ENCODE measurements at regions of chr3 and their contacts with region 1.

Region 1: GRCh38 chr3:108552267-108553159 is 36.7 kb downstream of the CIP2A start:
- DNase-seq: peak; percentile 68
- H3K4me3 ChIP-seq: no peak overlapping the region
- H3K27ac ChIP-seq: no peak overlapping the region
- H3K4me1 ChIP-seq: peaks cover 12% of the 10 kb centered on the region
- H3K27me3 ChIP-seq: no peaks in the 10 kb centered on the region
- CTCF ChIP-seq: peak; percentile 21 to 31
- POLR2A ChIP-seq: no peak

Region 2: GRCh38 chr3:107172411-107172810 is 1380.1 kb before region 1 on chr3:
- CTCF ChIA-PET with region 1: no interaction called
- POLR2A ChIA-PET with region 1: no interaction called
- dilution Hi-C with region 1: no loop called
- intact Hi-C with region 1: no loop called
- DNase-seq: no peak
- H3K4me3 ChIP-seq: no peak overlapping the region
- H3K27ac ChIP-seq: no peak overlapping the region
- H3K4me1 ChIP-seq: no peaks in the 10 kb centered on the region
- H3K27me3 ChIP-seq: no peaks in the 10 kb centered on the region
- CTCF ChIP-seq: no peak
- POLR2A ChIP-seq: no peak

Region 3: DNA sequence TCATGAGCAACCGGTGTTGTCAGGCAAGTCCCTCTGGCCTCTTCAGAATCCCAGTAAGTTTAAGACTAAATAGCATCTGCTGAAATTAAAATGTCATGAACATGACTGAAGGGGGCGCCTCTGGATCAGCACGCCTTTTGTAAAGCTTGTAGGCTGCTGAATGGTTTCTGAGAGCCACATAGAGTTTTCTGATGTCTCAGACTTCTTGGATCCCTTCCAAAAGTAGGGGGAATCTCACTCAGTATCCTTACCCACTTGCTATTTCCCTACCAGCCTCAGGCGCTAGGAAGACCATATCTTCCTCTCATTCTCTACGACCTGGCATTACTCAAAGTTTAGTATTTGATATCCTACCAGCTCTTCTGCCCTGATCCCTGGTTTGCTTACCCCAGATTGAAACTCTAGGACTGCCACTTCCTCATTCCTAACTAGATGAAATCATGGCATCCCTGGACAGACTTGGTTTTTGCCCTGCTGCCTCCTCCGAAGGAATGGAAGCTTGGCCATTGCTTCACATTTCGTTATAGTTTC is 399.0 kb before region 1 on chr3:
- CTCF ChIA-PET with region 1: interaction called, 6 read pairs
- POLR2A ChIA-PET with region 1: no interaction called
- dilution Hi-C with region 1: no loop called
- intact Hi-C with region 1: loop called (anchors 2 kb)
- DNase-seq: peak; percentile 43
- H3K4me3 ChIP-seq: no peak overlapping the region
- H3K27ac ChIP-seq: no peak overlapping the region
- H3K4me1 ChIP-seq: peaks cover 10% of the 10 kb centered on the region
- H3K27me3 ChIP-seq: no peaks in the 10 kb centered on the region
- CTCF ChIP-seq: peak; percentile 18 to 30
- POLR2A ChIP-seq: no peak

Region 4: GRCh38 chr3:108505811-108506210 is 46.7 kb before region 1 on chr3:
- CTCF ChIA-PET with region 1: interaction called, 22 read pairs
- POLR2A ChIA-PET with region 1: no interaction called
- dilution Hi-C with region 1: no loop called
- intact Hi-C with region 1: no loop called
- DNase-seq: no peak
- H3K4me3 ChIP-seq: no peak overlapping the region
- H3K27ac ChIP-seq: no peak overlapping the region
- H3K4me1 ChIP-seq: no peaks in the 10 kb centered on the region
- H3K27me3 ChIP-seq: peaks cover 2% of the 10 kb centered on the region in 2 experiments
- CTCF ChIP-seq: no peak
- POLR2A ChIP-seq: no peak

Region 5: GRCh38 chr3:108538083-108538482 is 14.4 kb before region 1 on chr3:
- CTCF ChIA-PET with region 1: interaction called, 16 read pairs
- POLR2A ChIA-PET with region 1: no interaction called
- dilution Hi-C with region 1: no loop called
- intact Hi-C with region 1: no loop called
- DNase-seq: peak; percentile 42
- H3K4me3 ChIP-seq: no peak overlapping the region
- H3K27ac ChIP-seq: no peak overlapping the region
- H3K4me1 ChIP-seq: peaks cover 17% of the 10 kb centered on the region
- H3K27me3 ChIP-seq: no peaks in the 10 kb centered on the region
- CTCF ChIP-seq: no peak
- POLR2A ChIP-seq: no peak

Region 6: DNA sequence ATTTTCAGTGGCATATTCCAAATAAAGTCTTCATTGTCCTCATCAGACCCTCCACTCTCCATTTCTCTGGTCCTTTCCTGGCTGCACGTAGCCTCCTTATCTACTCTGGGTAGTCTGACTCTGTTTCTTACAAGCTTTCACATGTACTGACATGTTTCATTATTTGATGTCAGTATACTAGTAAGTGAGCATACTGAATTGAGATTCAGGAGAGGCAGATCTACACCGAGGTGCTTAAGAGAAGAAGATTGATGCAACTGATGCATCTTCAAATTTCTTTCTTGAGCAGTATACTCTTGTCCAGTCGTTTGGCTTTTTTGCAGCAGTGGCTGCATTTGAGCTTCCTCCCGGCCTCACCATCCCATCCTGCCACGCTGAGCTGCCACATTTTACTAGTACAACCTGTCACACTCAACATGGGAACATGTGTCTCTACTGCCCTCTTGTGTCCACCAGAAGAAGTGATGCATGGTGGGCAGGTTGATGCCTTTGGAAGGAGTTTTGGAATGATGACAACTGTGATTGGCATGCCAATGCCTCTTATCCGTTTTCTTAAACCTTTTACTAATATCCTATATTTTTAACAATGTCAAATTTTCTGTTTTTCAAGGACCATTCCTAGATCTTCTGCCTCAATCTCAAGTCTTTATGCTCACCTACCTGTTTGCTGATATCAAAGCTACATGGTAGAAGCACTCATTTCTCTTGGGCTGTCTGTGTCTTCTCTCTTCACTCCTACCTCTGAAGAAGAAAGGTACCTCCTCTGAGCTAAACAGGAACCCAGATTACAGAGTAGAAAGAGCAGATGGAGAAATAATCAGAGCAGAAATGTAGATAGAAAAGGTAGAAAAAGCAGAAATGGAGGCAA is 362.5 kb after region 1 on chr3:
- CTCF ChIA-PET with region 1: interaction called, 16 read pairs
- POLR2A ChIA-PET with region 1: no interaction called
- dilution Hi-C with region 1: no loop called
- intact Hi-C with region 1: no loop called
- DNase-seq: peak; percentile 69
- H3K4me3 ChIP-seq: no peak overlapping the region
- H3K27ac ChIP-seq: no peak overlapping the region
- H3K4me1 ChIP-seq: no peaks in the 10 kb centered on the region
- H3K27me3 ChIP-seq: no peaks in the 10 kb centered on the region
- CTCF ChIP-seq: peak; percentile 78 to 84
- POLR2A ChIP-seq: no peak

Measured in endothelial cell of umbilical vein (primary cell).